Transverse colon (tissue), 4 donors: ENCODE measurements at regions of chrX and their contacts with region 1.

Region 1: GRCh38 chrX:137926090-137926489 is 360.2 kb downstream of the ZIC3 start:
- DNase-seq: no peak
- H3K4me3 ChIP-seq: no peak overlapping the region
- H3K27ac ChIP-seq: no peak overlapping the region
- H3K4me1 ChIP-seq: no peaks in the 10 kb centered on the region
- H3K27me3 ChIP-seq: no peaks in the 10 kb centered on the region
- CTCF ChIP-seq: no peak
- EP300 ChIP-seq: no peak
- POLR2A ChIP-seq: no peak

Region 2: GRCh38 chrX:136780763-136781162 is 1145.3 kb before region 1 on chrX and contains the start of gene ARHGEF6:
- in situ Hi-C with region 1: no loop called
- intact Hi-C with region 1: no loop called
- DNase-seq: peak; percentile 38
- H3K4me3 ChIP-seq: peak within 1 kb of the TSS in 1 of 4 donors; percentile 34
- H3K27ac ChIP-seq: peak within 1 kb of the TSS; percentile 53 to 71 (median 66)
- H3K4me1 ChIP-seq: peaks cover 0 to 4% (median 0%) of the 10 kb centered on the region in 4 donors
- H3K27me3 ChIP-seq: no peaks in the 10 kb centered on the region
- CTCF ChIP-seq: no peak
- EP300 ChIP-seq: no peak
- POLR2A ChIP-seq: peak; percentile 40
- total RNA-seq, gene ARHGEF6: 4.2 to 13.9 (median 8.2) TPM

Region 3: DNA sequence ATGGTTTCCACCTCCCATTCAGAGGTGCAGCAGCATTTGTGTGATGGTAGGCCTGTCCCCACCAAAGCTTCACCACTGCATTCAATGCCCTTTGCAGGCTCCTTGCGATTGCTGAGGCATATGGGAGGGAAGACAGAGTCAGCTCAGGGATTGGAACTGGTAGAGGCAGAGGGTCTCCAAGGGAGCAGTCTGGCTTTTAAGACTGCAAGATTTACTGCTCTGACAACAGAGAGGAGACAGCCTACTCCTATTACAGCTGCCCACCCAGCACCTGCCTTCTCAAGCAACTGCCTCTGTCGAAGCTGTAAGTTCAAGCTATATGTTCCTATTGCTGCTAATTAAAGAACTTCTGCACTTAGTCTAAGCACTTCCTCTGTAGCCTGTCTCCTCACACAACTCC is 303.6 kb after region 1 on chrX:
- in situ Hi-C with region 1: no loop called
- intact Hi-C with region 1: loop called (anchors 5 kb)
- DNase-seq: no peak
- H3K4me3 ChIP-seq: no peak overlapping the region
- H3K27ac ChIP-seq: no peak overlapping the region
- H3K4me1 ChIP-seq: no peaks in the 10 kb centered on the region
- H3K27me3 ChIP-seq: no peaks in the 10 kb centered on the region
- CTCF ChIP-seq: no peak
- EP300 ChIP-seq: no peak
- POLR2A ChIP-seq: no peak